ENCODE measurements at regions of chr2 and their contacts with region 1.

Region 1: DNA sequence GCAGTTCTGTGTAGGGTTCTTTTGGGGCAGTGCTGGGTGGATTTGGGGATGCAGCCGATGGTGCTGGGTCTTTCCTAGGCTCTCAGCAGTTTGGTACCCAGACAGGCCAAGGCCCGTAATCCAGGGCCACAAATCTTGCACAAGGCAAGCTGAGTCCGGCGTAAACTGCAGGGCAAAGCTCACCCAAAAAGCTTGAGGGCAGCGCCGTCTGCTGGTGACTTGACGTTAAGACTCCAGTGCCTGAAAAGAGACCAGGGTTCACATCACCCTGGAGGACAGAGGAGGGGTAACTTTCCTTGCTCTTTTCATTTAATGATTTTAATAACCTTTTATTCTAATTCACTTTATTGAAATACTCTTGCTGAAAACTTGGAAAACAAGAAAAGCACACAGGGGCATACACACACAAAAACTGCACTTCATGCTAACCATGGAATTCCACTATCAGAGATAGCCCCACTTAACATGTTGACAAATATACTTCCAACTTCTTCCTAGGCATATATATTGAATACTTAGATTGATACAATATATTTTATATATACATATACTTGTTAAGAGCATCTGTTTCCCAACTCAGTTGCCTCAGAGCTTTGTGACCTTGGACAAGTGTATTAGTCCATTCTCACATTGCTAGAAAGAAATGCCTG is 38.9 kb downstream of the CNGA3 start:
- DNase-seq: peak; percentile 76 to 87 (median 84)
- ATAC-seq: peak; percentile 96
- H3K4me3 ChIP-seq: no peak overlapping the region
- H3K27ac ChIP-seq: no peak overlapping the region
- H3K4me1 ChIP-seq: no peaks in the 10 kb centered on the region
- H3K27me3 ChIP-seq: peaks cover 44 to 74% of the 10 kb centered on the region in 2 experiments
- CTCF ChIP-seq: peak; percentile 94 to 97 (median 96)
- EP300 ChIP-seq: no peak
- POLR2A ChIP-seq: no peak
- RAD21 ChIP-seq: peak; percentile 88 to 93

Region 2: DNA sequence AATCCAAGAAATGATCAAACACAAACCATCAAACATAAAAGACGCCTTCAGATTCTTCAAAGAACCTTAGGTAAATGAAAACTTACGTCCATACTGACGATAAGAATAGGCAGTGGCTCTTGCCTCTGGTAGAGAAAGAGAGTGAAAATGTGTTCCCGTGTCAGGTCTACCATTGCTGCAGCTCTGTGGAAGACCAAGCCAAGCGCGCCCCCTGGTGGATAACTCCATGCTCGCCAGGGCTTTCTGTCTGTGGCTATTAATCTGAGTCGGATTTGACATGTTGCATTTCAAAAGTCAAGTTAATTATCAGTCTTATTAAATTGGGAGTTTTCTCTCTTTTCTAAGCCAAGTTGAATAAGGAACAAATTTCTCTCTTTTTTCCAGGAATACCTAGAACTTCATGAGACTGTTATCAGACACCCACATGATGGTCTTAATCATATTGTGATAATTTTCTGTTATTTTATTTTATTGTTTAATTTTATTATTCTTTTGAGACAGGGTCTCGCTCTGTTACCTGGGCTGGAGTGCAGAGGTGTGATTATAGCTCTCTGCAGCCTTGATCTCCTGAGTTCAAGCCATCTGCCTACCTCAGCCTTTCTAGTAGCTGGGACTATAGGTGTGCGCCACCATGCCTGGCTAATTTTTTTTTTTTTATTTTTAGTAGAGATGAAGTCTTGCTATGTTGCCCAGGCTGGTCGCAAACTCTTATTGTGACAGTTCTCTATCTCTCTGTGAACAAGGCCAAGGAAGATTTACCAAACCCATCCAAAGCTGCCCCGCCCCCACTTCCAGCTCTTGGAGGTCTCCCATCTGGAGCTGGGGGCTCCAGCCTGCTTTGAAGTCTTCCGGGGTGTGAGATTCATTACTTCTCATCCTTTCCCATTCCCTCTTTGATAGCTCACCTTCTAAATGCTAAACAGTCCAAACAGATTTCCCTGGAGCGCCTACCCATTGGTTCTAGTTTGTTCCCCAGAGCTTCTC is 687.6 kb before region 1 on chr2:
- CTCF ChIA-PET with region 1: interaction called, 12 read pairs
- POLR2A ChIA-PET with region 1: interaction called, 4 read pairs
- in situ Hi-C with region 1: no loop called
- intact Hi-C with region 1: loop called (anchors 10 kb)
- DNase-seq: peak; percentile 77 to 92 (median 81)
- ATAC-seq: peak; percentile 93
- H3K4me3 ChIP-seq: no peak overlapping the region
- H3K27ac ChIP-seq: no peak overlapping the region
- H3K4me1 ChIP-seq: peaks cover 0 to 6% of the 10 kb centered on the region in 2 experiments; a peak in 2 of 5 replicates
- H3K27me3 ChIP-seq: no peaks in the 10 kb centered on the region
- CTCF ChIP-seq: peak; percentile 94 to 99 (median 97)
- EP300 ChIP-seq: no peak
- POLR2A ChIP-seq: no peak
- RAD21 ChIP-seq: peak; percentile 100

Region 3: DNA sequence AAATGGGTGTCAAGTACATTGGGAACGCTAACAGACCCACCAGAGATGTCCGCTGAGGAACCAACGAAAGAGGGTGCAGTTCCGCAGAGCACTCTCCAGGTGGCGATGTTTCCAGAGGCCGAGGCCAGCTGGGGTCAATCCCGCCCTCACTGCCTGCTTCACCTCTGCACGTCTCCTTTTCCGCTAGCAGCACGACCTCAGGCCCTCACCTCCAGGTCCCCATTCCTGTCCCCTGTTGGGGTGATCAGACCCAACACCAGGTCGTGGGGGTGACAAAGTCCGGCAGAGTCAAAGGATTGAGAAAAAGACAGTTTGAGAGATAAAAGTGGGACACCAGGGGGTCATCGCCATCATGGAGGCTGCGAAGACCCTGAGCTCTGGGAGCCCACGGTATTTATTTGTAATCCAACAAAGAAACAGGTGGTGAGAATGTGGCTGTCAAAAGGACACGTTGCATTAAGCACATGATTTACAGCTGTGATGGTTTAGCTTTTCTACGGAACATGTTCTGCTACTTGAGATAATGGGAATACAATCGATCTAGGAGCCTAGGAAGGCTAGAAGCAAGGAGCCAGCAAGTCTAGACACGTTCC is 644.5 kb before region 1 on chr2:
- CTCF ChIA-PET with region 1: no interaction called
- POLR2A ChIA-PET with region 1: no interaction called
- in situ Hi-C with region 1: no loop called
- intact Hi-C with region 1: loop called (anchors 10 kb)
- DNase-seq: peak; percentile 83 to 89 (median 89)
- ATAC-seq: peak; percentile 88
- H3K4me3 ChIP-seq: no peak overlapping the region
- H3K27ac ChIP-seq: peak overlapping the region; percentile 19; the same call in 1 of the 3 replicates
- H3K4me1 ChIP-seq: peaks cover 10 to 18% of the 10 kb centered on the region in 2 experiments; a peak in 4 of 5 replicates
- H3K27me3 ChIP-seq: peaks cover 8 to 35% of the 10 kb centered on the region in 2 experiments; a peak in 3 of 5 replicates
- CTCF ChIP-seq: peak; percentile 87 to 95 (median 90)
- EP300 ChIP-seq: peak; percentile 25; the same call in 1 of the 2 replicates
- POLR2A ChIP-seq: no peak
- RAD21 ChIP-seq: peak; percentile 62 to 75; a peak in 3 of 4 replicates

Region 4: GRCh38 chr2:97806738-97807618 is 578.2 kb before region 1 on chr2:
- CTCF ChIA-PET with region 1: interaction called, 16 read pairs
- POLR2A ChIA-PET with region 1: no interaction called
- in situ Hi-C with region 1: loop called (anchors 25 kb)
- intact Hi-C with region 1: loop called (anchors 1 kb)
- DNase-seq: peak; percentile 53 to 84 (median 65)
- ATAC-seq: peak; percentile 100
- H3K4me3 ChIP-seq: no peak overlapping the region
- H3K27ac ChIP-seq: no peak overlapping the region
- H3K4me1 ChIP-seq: no peaks in the 10 kb centered on the region
- H3K27me3 ChIP-seq: no peaks in the 10 kb centered on the region
- CTCF ChIP-seq: peak; percentile 93 to 96 (median 94)
- EP300 ChIP-seq: no peak
- POLR2A ChIP-seq: no peak
- RAD21 ChIP-seq: peak; percentile 96 to 97

Region 5: DNA sequence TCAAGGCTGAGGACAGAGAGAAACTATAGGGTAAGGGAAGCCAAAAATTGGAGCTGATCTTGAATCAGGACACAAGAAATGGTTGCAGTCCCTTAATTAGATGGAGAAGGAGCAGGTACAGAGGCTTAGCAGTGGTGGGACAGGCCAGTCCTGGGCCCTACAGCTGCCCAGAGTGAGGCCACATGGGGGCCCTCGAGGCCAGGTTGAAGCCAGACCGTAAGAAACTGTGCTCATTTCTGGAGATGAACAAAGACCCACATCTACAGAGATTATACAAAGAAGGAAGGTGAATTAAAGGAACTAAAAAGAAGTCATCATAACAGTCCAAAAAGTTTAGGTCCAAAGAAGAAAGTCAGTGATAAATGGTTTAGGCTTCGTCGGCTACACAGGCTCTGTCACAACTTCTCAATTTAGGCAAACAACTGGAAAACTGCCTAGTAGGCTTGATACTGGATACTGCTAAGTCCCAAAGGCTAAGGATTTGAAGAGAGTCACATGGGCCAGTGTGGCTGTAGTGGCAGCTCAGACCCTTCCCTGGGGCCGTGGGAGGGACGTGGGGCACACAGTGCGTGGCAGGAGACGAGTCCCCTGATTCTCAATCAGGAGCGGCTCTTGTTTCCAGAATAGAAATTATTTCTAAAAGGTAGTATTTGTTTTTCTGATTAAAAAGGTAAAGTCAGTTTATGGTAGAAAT is 89.3 kb before region 1 on chr2:
- CTCF ChIA-PET with region 1: no interaction called
- POLR2A ChIA-PET with region 1: no interaction called
- in situ Hi-C with region 1: no loop called
- intact Hi-C with region 1: loop called (anchors 5 kb)
- DNase-seq: peak in 2 of 4 experiments; percentile 9 to 21
- ATAC-seq: peak; percentile 81
- H3K4me3 ChIP-seq: no peak overlapping the region
- H3K27ac ChIP-seq: no peak overlapping the region
- H3K4me1 ChIP-seq: no peaks in the 10 kb centered on the region
- H3K27me3 ChIP-seq: peaks cover 14 to 29% of the 10 kb centered on the region in 2 experiments; a peak in 4 of 5 replicates
- CTCF ChIP-seq: peak; percentile 25 to 40 (median 37); a peak in 3 of 6 replicates
- EP300 ChIP-seq: no peak
- POLR2A ChIP-seq: no peak
- RAD21 ChIP-seq: peak in 1 of 2 experiments; percentile 45; a peak in 2 of 4 replicates

Region 6: DNA sequence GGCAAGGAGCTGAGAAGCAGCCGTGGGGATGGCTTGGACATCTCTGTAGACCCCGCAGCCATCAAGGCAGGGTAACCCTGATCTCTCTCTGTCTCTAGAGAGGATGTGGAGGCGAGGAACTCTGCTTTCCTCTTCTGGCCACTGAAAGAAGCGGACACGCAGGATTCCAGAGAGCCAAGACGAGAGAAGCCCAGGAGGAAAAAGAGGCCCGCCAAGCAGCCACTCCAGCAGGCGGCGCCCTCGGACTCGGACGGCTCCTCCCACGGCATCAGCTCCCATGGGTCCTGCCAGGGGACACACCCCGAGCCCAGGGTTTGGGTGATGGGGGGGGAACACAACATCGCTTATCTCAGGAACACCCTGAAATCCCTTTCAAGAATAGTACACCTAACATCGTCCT is 73.5 kb before region 1 on chr2:
- CTCF ChIA-PET with region 1: no interaction called
- POLR2A ChIA-PET with region 1: no interaction called
- in situ Hi-C with region 1: no loop called
- intact Hi-C with region 1: loop called (anchors 5 kb)
- DNase-seq: peak; percentile 25 to 47 (median 36)
- ATAC-seq: peak; percentile 78
- H3K4me3 ChIP-seq: no peak overlapping the region
- H3K27ac ChIP-seq: no peak overlapping the region
- H3K4me1 ChIP-seq: peaks cover 0 to 5% of the 10 kb centered on the region in 2 experiments; a peak in 1 of 5 replicates
- H3K27me3 ChIP-seq: peaks cover 16 to 43% of the 10 kb centered on the region in 2 experiments; a peak in 4 of 5 replicates
- CTCF ChIP-seq: peak; percentile 48 to 61 (median 58)
- EP300 ChIP-seq: no peak
- POLR2A ChIP-seq: no peak
- RAD21 ChIP-seq: peak in 1 of 2 experiments; percentile 44; a peak in 2 of 4 replicates

Region 7: DNA sequence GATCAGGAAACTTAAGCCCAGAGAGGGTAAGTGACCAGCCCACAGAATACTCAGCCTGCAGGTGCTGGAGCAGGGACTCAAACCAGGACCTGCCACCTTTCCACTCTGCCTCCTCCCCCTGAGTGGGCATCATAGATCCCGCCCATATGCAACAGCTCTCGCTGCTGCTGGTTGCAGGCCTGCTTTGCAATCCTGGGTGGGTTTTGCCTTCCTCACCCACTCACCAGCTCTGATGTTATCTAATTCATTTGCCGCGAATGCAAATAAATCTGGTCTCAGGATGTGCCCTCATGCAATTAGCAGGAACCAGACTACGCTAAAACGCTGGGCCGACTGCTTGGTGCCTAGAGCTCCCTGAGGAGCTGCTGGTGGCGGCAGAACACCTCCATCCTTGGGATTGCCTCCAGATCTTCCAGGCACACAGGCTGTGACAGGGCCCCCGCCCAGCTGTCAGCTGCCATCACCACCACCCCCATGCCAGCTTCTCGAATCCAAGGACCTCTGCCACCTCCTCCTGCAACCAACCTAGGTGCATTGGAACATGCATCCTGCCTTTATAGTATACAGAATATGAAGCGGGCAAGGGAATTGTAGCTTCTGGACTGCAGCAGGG is 10.1 kb before region 1 on chr2:
- CTCF ChIA-PET with region 1: no interaction called
- POLR2A ChIA-PET with region 1: no interaction called
- in situ Hi-C with region 1: no loop called
- intact Hi-C with region 1: no loop called
- DNase-seq: no peak
- ATAC-seq: no peak
- H3K4me3 ChIP-seq: no peak overlapping the region
- H3K27ac ChIP-seq: no peak overlapping the region
- H3K4me1 ChIP-seq: no peaks in the 10 kb centered on the region
- H3K27me3 ChIP-seq: peaks cover 23 to 64% of the 10 kb centered on the region in 2 experiments
- CTCF ChIP-seq: no peak
- EP300 ChIP-seq: no peak
- POLR2A ChIP-seq: no peak
- RAD21 ChIP-seq: no peak

Measured in K562 (cell line).